B cell (primary cell): ENCODE measurements at regions of chr1 and their contacts with region 1.

Region 1: GRCh38 chr1:224329842-224330753 is at the start of gene NVL:
- DNase-seq: peak; percentile 92
- ATAC-seq: peak; percentile 86
- H3K4me3 ChIP-seq: peak within 1 kb of the TSS; percentile 61 to 88 (median 81)
- H3K4me3 Mint-ChIP-seq: peak within 1 kb of the TSS; percentile 99
- H3K27ac ChIP-seq: peak within 1 kb of the TSS; percentile 94 to 95
- H3K27ac Mint-ChIP-seq: peak within 1 kb of the TSS; percentile 100
- H3K4me1 ChIP-seq: peaks cover 11 to 25% of the 10 kb centered on the region in 2 donors
- H3K4me1 Mint-ChIP-seq: peaks cover 46% of the 10 kb centered on the region
- H3K27me3 ChIP-seq: no peaks in the 10 kb centered on the region
- H3K27me3 Mint-ChIP-seq: no peaks in the 10 kb centered on the region
- CTCF ChIP-seq: no peak
- total RNA-seq, gene NVL: 45.5 and 47.8 TPM in 2 replicates

Region 2: GRCh38 chr1:223700942-223701637 is 629.0 kb before region 1 on chr1:
- CTCF ChIA-PET with region 1: no interaction called
- POLR2A ChIA-PET with region 1: no interaction called
- intact Hi-C with region 1: loop called (anchors 1 kb)
- DNase-seq: no peak
- ATAC-seq: no peak
- H3K4me3 ChIP-seq: no peak overlapping the region
- H3K4me3 Mint-ChIP-seq: no peak overlapping the region
- H3K27ac ChIP-seq: no peak overlapping the region
- H3K27ac Mint-ChIP-seq: no peak overlapping the region
- H3K4me1 ChIP-seq: peaks cover 4 to 8% of the 10 kb centered on the region in 2 donors
- H3K4me1 Mint-ChIP-seq: peaks cover 8% of the 10 kb centered on the region
- H3K27me3 ChIP-seq: peaks cover 0 to 10% (median 0%) of the 10 kb centered on the region in 4 experiments
- H3K27me3 Mint-ChIP-seq: peaks cover 24% of the 10 kb centered on the region
- CTCF ChIP-seq: no peak

Region 3: GRCh38 chr1:224168859-224169380 is 161.2 kb before region 1 on chr1:
- CTCF ChIA-PET with region 1: interaction called, 10 read pairs
- POLR2A ChIA-PET with region 1: no interaction called
- intact Hi-C with region 1: loop called (anchors 1 kb)
- DNase-seq: peak; percentile 85
- ATAC-seq: peak; percentile 86
- H3K4me3 ChIP-seq: peak overlapping the region in 1 of 5 experiments; percentile 40
- H3K4me3 Mint-ChIP-seq: peak overlapping the region; percentile 53
- H3K27ac ChIP-seq: peak overlapping the region; percentile 35 to 43
- H3K27ac Mint-ChIP-seq: peak overlapping the region; percentile 48
- H3K4me1 ChIP-seq: peaks cover 26 to 30% of the 10 kb centered on the region in 2 donors
- H3K4me1 Mint-ChIP-seq: peaks cover 27% of the 10 kb centered on the region
- H3K27me3 ChIP-seq: no peaks in the 10 kb centered on the region
- H3K27me3 Mint-ChIP-seq: no peaks in the 10 kb centered on the region
- CTCF ChIP-seq: no peak

Region 4: DNA sequence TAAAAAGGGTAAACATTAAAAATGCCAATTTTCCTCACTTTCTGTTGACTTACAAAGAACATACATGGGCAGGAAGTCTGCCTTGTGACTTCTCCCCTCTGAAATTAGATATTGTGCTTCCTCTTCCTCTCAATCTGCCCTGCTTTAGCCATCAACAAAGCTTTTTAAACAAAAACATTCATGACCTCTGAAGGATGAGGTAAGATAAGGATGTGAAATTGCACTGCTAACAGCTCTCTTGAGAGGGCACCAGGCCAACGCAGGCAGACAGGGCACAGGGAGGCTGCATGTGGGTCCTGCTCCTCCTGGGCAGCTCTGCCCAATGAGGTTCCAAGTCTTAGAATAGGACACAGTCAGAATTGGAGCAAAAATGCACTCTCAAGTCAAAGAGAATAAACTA is 84.9 kb before region 1 on chr1:
- CTCF ChIA-PET with region 1: interaction called, 4 read pairs
- POLR2A ChIA-PET with region 1: interaction called, 3 read pairs
- intact Hi-C with region 1: loop called (anchors 10 kb)
- DNase-seq: peak; percentile 78
- ATAC-seq: peak; percentile 98
- H3K4me3 ChIP-seq: peak overlapping the region in 1 of 5 experiments; percentile 36
- H3K4me3 Mint-ChIP-seq: peak overlapping the region; percentile 21
- H3K27ac ChIP-seq: peak overlapping the region; percentile 90 to 91
- H3K27ac Mint-ChIP-seq: peak overlapping the region; percentile 97
- H3K4me1 ChIP-seq: peaks cover 33 to 36% of the 10 kb centered on the region in 2 donors
- H3K4me1 Mint-ChIP-seq: peaks cover 26% of the 10 kb centered on the region
- H3K27me3 ChIP-seq: no peaks in the 10 kb centered on the region
- H3K27me3 Mint-ChIP-seq: no peaks in the 10 kb centered on the region
- CTCF ChIP-seq: no peak

Region 5: DNA sequence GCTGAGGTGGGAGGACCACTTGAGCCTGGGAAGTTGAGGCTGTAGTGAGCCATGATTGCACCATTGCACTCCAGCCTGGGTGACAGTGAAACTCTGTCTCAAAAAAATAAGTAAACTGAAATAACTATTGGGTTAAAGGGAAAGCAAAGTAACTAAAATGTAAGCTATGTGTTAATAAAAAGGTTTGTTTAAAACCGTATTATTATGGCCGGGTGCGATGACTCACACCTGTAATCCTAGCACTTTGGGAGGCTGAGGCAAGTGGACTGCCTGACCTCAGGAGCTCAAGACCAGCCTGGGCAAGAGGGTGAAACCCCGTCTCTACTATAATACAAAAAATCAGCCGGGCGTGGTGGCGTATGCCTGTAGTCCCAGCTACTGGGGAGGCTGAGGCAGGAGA is 27.2 kb before region 1 on chr1:
- CTCF ChIA-PET with region 1: no interaction called
- POLR2A ChIA-PET with region 1: no interaction called
- intact Hi-C with region 1: no loop called
- DNase-seq: no peak
- ATAC-seq: no peak
- H3K4me3 ChIP-seq: no peak overlapping the region
- H3K4me3 Mint-ChIP-seq: no peak overlapping the region
- H3K27ac ChIP-seq: no peak overlapping the region
- H3K27ac Mint-ChIP-seq: no peak overlapping the region
- H3K4me1 ChIP-seq: no peaks in the 10 kb centered on the region
- H3K4me1 Mint-ChIP-seq: no peaks in the 10 kb centered on the region
- H3K27me3 ChIP-seq: no peaks in the 10 kb centered on the region
- H3K27me3 Mint-ChIP-seq: no peaks in the 10 kb centered on the region
- CTCF ChIP-seq: no peak

Region 6: GRCh38 chr1:224356685-224357625 is 26.9 kb after region 1 on chr1 and contains the start of gene CNIH4:
- CTCF ChIA-PET with region 1: interaction called, 4 read pairs
- POLR2A ChIA-PET with region 1: no interaction called
- intact Hi-C with region 1: loop called (anchors 1 kb)
- DNase-seq: peak; percentile 94
- ATAC-seq: peak; percentile 98
- H3K4me3 ChIP-seq: peak within 1 kb of the TSS; percentile 69 to 88 (median 82)
- H3K4me3 Mint-ChIP-seq: peak within 1 kb of the TSS; percentile 86
- H3K27ac ChIP-seq: peak within 1 kb of the TSS; percentile 34 to 61
- H3K27ac Mint-ChIP-seq: peak within 1 kb of the TSS; percentile 92
- H3K4me1 ChIP-seq: peaks cover 9 to 14% of the 10 kb centered on the region in 2 donors
- H3K4me1 Mint-ChIP-seq: peaks cover 22% of the 10 kb centered on the region
- H3K27me3 ChIP-seq: no peaks in the 10 kb centered on the region
- H3K27me3 Mint-ChIP-seq: no peaks in the 10 kb centered on the region
- CTCF ChIP-seq: no peak
- total RNA-seq, gene CNIH4: 27.2 and 31.5 TPM in 2 replicates

Region 7: DNA sequence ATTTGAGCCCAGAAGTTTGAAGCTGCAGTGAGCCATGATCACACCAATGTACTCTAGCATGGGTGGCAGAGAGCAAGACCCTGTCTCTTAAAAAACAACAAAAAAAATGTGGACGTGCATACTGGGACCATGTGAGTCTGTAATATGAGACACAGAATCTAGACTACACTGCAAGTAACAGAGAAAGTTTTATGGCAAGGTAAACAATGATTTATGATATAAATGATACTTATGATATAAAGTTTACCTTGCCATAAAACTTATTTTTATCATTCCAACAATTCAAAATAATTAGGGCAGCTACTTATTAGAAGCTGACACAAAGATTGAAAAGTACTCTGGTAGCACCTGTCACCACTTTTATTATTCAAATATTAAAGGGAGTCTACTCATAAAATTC is 69.8 kb after region 1 on chr1:
- CTCF ChIA-PET with region 1: no interaction called
- POLR2A ChIA-PET with region 1: no interaction called
- intact Hi-C with region 1: no loop called
- DNase-seq: no peak
- ATAC-seq: no peak
- H3K4me3 ChIP-seq: no peak overlapping the region
- H3K4me3 Mint-ChIP-seq: no peak overlapping the region
- H3K27ac ChIP-seq: no peak overlapping the region
- H3K27ac Mint-ChIP-seq: no peak overlapping the region
- H3K4me1 ChIP-seq: no peaks in the 10 kb centered on the region
- H3K4me1 Mint-ChIP-seq: no peaks in the 10 kb centered on the region
- H3K27me3 ChIP-seq: no peaks in the 10 kb centered on the region
- H3K27me3 Mint-ChIP-seq: no peaks in the 10 kb centered on the region
- CTCF ChIP-seq: no peak

Region 8: GRCh38 chr1:225378880-225379279 is 1048.8 kb after region 1 on chr1:
- CTCF ChIA-PET with region 1: no interaction called
- POLR2A ChIA-PET with region 1: no interaction called
- intact Hi-C with region 1: no loop called
- DNase-seq: no peak
- ATAC-seq: no peak
- H3K4me3 ChIP-seq: no peak overlapping the region
- H3K4me3 Mint-ChIP-seq: no peak overlapping the region
- H3K27ac ChIP-seq: no peak overlapping the region
- H3K27ac Mint-ChIP-seq: no peak overlapping the region
- H3K4me1 ChIP-seq: no peaks in the 10 kb centered on the region
- H3K4me1 Mint-ChIP-seq: no peaks in the 10 kb centered on the region
- H3K27me3 ChIP-seq: no peaks in the 10 kb centered on the region
- H3K27me3 Mint-ChIP-seq: no peaks in the 10 kb centered on the region
- CTCF ChIP-seq: no peak